Activated T-helper 2 cell treated with anti-CD3 and anti-CD28 coated beads, Interferon-gamma antibody, Interleukin-2, Interleukin-4, amounts not matched to agents 10 μg/mL and 5 μg/mL and 100 μg/mL, durations not matched to agents 14 hours and 24 hours and 36 hours (primary cell): ENCODE measurements at regions of chr7 and their contacts with region 1.

Region 1: DNA sequence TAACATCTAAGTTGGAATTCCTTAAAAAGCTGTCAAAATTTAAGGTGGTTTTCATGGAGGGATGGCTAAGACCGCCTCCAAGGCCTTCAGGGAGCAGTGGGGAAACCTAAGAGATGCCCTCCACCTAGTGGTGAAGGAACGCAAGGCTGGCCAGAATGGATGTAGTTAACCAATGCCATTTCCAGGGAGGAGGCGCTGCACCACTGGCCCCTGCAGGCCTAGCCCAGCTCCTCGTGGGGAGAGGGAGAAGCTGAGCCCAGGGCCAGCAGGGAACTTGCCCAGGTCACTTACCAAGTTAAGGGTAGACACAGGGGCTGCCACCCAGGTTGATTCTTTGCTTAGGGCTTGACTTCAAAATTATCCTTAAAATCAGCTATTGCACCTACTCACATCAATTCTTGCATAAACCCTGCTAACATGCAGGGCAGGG is 32.0 kb downstream of the FIGNL1 start:
- DNase-seq: peak; percentile 66
- H3K4me3 Mint-ChIP-seq: no peak overlapping the region
- H3K27ac Mint-ChIP-seq: no peak overlapping the region
- H3K4me1 Mint-ChIP-seq: peaks cover 28% of the 10 kb centered on the region
- H3K27me3 Mint-ChIP-seq: no peaks in the 10 kb centered on the region

Region 2: GRCh38 chr7:50142425-50143017 is 275.6 kb before region 1 on chr7:
- intact Hi-C with region 1: loop called (anchors 1 kb)
- DNase-seq: no peak
- H3K4me3 Mint-ChIP-seq: peak overlapping the region; percentile 30
- H3K27ac Mint-ChIP-seq: peak overlapping the region; percentile 77
- H3K4me1 Mint-ChIP-seq: peaks cover 44% of the 10 kb centered on the region
- H3K27me3 Mint-ChIP-seq: peaks cover 2% of the 10 kb centered on the region

Region 3: GRCh38 chr7:50205011-50205410 is 213.1 kb before region 1 on chr7:
- intact Hi-C with region 1: loop called (anchors 1 kb)
- DNase-seq: no peak
- H3K4me3 Mint-ChIP-seq: no peak overlapping the region
- H3K27ac Mint-ChIP-seq: no peak overlapping the region
- H3K4me1 Mint-ChIP-seq: peaks cover 83% of the 10 kb centered on the region
- H3K27me3 Mint-ChIP-seq: no peaks in the 10 kb centered on the region